Psoas muscle (tissue), 8 donors: ENCODE measurements at regions of chr1 and their contacts with region 1.

Region 1: GRCh38 chr1:145978854-145979759 is 14.6 kb downstream of the POLR3GL start:
- DNase-seq: peak; percentile 90 to 94
- ATAC-seq: peak; percentile 78 to 83 (median 82)
- H3K4me3 ChIP-seq: peak overlapping the region; percentile 50
- H3K27ac ChIP-seq: peak overlapping the region; percentile 98
- H3K4me1 ChIP-seq: peaks cover 63% of the 10 kb centered on the region
- H3K27me3 ChIP-seq: no peaks in the 10 kb centered on the region
- CTCF ChIP-seq: peak; percentile 27

Region 2: DNA sequence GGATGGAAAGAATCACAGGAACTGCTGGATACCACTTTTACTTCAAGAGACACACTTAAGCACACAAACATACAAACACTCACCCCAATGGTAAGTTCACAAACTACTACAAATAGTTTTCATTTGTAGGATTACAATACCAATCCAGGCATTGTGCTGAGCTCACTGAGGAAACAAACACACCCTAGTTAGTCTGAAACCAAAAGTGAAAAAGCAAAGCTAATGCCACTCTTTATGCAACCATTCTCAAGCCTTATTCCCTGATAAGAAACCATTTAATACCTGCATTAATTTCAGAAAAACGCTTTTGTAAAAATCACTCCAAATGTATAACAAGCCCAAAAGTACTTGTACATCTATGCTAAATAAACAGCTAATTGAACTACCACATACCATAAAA is 193.6 kb before region 1 on chr1:
- intact Hi-C with region 1: no loop called
- DNase-seq: no peak
- ATAC-seq: no peak
- H3K4me3 ChIP-seq: no peak overlapping the region
- H3K27ac ChIP-seq: peak overlapping the region; percentile 86
- H3K4me1 ChIP-seq: peaks cover 46% of the 10 kb centered on the region
- H3K27me3 ChIP-seq: no peaks in the 10 kb centered on the region
- CTCF ChIP-seq: no peak

Region 3: GRCh38 chr1:145827966-145828692 is 151.0 kb before region 1 on chr1:
- intact Hi-C with region 1: no loop called
- DNase-seq: no peak
- ATAC-seq: no peak
- H3K4me3 ChIP-seq: no peak overlapping the region
- H3K27ac ChIP-seq: no peak overlapping the region
- H3K4me1 ChIP-seq: peaks cover 10% of the 10 kb centered on the region
- H3K27me3 ChIP-seq: no peaks in the 10 kb centered on the region
- CTCF ChIP-seq: no peak

Region 4: GRCh38 chr1:145845514-145846161 is 133.5 kb before region 1 on chr1 and contains the start of gene NUDT17:
- intact Hi-C with region 1: no loop called
- DNase-seq: peak; percentile 84 to 92
- ATAC-seq: peak; percentile 87 to 94 (median 90)
- H3K4me3 ChIP-seq: peak within 1 kb of the TSS; percentile 78
- H3K27ac ChIP-seq: peak within 1 kb of the TSS; percentile 78
- H3K4me1 ChIP-seq: peaks cover 10% of the 10 kb centered on the region
- H3K27me3 ChIP-seq: no peaks in the 10 kb centered on the region
- CTCF ChIP-seq: peak; percentile 92
- total RNA-seq, gene NUDT17: 1.4 to 2.9 (median 1.7) TPM

Region 5: GRCh38 chr1:145963995-145964901 is 14.9 kb before region 1 on chr1 and contains the starts of genes ANKRD34A and POLR3GL:
- intact Hi-C with region 1: loop called in 1 of 2 experiments (anchors 2 kb)
- DNase-seq: peak; percentile 95 to 97
- ATAC-seq: peak; percentile 77 to 82 (median 78)
- H3K4me3 ChIP-seq: peak within 1 kb of the TSS; percentile 85
- H3K27ac ChIP-seq: peak within 1 kb of the TSS; percentile 86
- H3K4me1 ChIP-seq: peaks cover 42% of the 10 kb centered on the region
- H3K27me3 ChIP-seq: no peaks in the 10 kb centered on the region
- CTCF ChIP-seq: no peak
- total RNA-seq, gene ANKRD34A: 0.42 to 12.3 (median 4.9) TPM
- total RNA-seq, gene POLR3GL: 30.5 to 62.5 (median 48.9) TPM

Region 6: GRCh38 chr1:145996433-145997015 is 17.4 kb after region 1 on chr1 and contains the start of gene TXNIP:
- intact Hi-C with region 1: loop called in 1 of 2 experiments (anchors 2 kb)
- DNase-seq: peak; percentile 99 to 100
- ATAC-seq: peak; percentile 60 to 82 (median 72)
- H3K4me3 ChIP-seq: peak within 1 kb of the TSS; percentile 80
- H3K27ac ChIP-seq: peak within 1 kb of the TSS; percentile 98
- H3K4me1 ChIP-seq: peaks cover 29% of the 10 kb centered on the region
- H3K27me3 ChIP-seq: no peaks in the 10 kb centered on the region
- CTCF ChIP-seq: no peak
- total RNA-seq, gene TXNIP: 887 to 2,747 (median 1,374) TPM

Region 7: DNA sequence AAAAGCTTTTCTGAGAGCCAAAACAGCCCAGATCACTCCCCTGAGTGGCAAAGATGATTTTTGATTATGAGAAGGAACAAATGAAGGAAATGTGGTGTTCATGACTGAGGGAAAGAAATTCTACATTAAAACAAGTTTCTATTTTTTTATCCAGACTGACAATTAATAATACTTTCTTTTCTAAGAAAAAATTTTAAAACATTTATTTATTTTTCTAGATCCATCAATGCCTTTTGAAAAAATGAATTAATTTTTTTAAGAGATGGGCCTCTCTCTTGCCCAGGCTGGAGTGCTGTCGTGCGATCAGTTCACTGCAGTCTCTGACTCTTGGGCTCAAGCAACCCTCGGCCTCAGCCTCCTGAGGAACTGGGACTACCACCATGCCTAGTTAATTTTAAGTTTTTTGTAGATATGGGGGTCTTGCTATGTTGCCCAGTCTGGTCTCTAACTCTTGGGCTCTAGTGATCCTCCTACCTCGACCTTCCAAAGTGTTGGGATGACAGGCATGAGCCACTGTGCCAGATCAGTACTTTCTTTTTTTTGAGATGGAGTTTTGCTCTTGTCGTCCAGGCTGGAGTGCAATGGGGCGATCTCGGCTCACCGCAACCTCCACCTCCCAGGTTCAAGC is 28.5 kb after region 1 on chr1:
- intact Hi-C with region 1: loop called (anchors 1 to 2 kb)
- DNase-seq: no peak
- ATAC-seq: peak in 3 of 4 donors; percentile 32 to 45 (median 42)
- H3K4me3 ChIP-seq: peak overlapping the region; percentile 46
- H3K27ac ChIP-seq: peak overlapping the region; percentile 93
- H3K4me1 ChIP-seq: peaks cover 34% of the 10 kb centered on the region
- H3K27me3 ChIP-seq: no peaks in the 10 kb centered on the region
- CTCF ChIP-seq: no peak

Region 8: GRCh38 chr1:146012737-146013403 is 33.8 kb after region 1 on chr1:
- intact Hi-C with region 1: loop called (anchors 1 to 2 kb)
- DNase-seq: no peak
- ATAC-seq: peak; percentile 53 to 78 (median 67)
- H3K4me3 ChIP-seq: no peak overlapping the region
- H3K27ac ChIP-seq: peak overlapping the region; percentile 26
- H3K4me1 ChIP-seq: peaks cover 24% of the 10 kb centered on the region
- H3K27me3 ChIP-seq: no peaks in the 10 kb centered on the region
- CTCF ChIP-seq: peak; percentile 73